ENCODE measurements at regions of chr13 and their contacts with region 1.

Region 1: GRCh38 chr13:33610471-33611015 is 207.4 kb upstream of the RFC3 start:
- DNase-seq: peak; percentile 40
- H3K4me3 Mint-ChIP-seq: peak overlapping the region; percentile 70
- H3K27ac Mint-ChIP-seq: peak overlapping the region; percentile 95
- H3K4me1 Mint-ChIP-seq: peaks cover 50% of the 10 kb centered on the region
- H3K27me3 Mint-ChIP-seq: no peaks in the 10 kb centered on the region

Region 2: GRCh38 chr13:32639502-32640105 is 970.9 kb before region 1 on chr13:
- intact Hi-C with region 1: loop called (anchors 10 kb)
- DNase-seq: no peak
- H3K4me3 Mint-ChIP-seq: no peak overlapping the region
- H3K27ac Mint-ChIP-seq: no peak overlapping the region
- H3K4me1 Mint-ChIP-seq: peaks cover 29% of the 10 kb centered on the region
- H3K27me3 Mint-ChIP-seq: no peaks in the 10 kb centered on the region

Region 3: GRCh38 chr13:33188093-33188882 is 422.3 kb before region 1 on chr13:
- intact Hi-C with region 1: loop called (anchors 2 kb)
- DNase-seq: no peak
- H3K4me3 Mint-ChIP-seq: no peak overlapping the region
- H3K27ac Mint-ChIP-seq: peak overlapping the region; percentile 97
- H3K4me1 Mint-ChIP-seq: peaks cover 30% of the 10 kb centered on the region
- H3K27me3 Mint-ChIP-seq: no peaks in the 10 kb centered on the region

Region 4: GRCh38 chr13:33624740-33625139 is 14.2 kb after region 1 on chr13:
- intact Hi-C with region 1: loop called (anchors 1 kb)
- DNase-seq: no peak
- H3K4me3 Mint-ChIP-seq: no peak overlapping the region
- H3K27ac Mint-ChIP-seq: peak overlapping the region; percentile 58
- H3K4me1 Mint-ChIP-seq: peaks cover 23% of the 10 kb centered on the region
- H3K27me3 Mint-ChIP-seq: no peaks in the 10 kb centered on the region

Region 5: GRCh38 chr13:33723772-33724435 is 113.4 kb after region 1 on chr13:
- intact Hi-C with region 1: loop called (anchors 1 kb)
- DNase-seq: peak; percentile 56
- H3K4me3 Mint-ChIP-seq: no peak overlapping the region
- H3K27ac Mint-ChIP-seq: peak overlapping the region; percentile 80
- H3K4me1 Mint-ChIP-seq: peaks cover 34% of the 10 kb centered on the region
- H3K27me3 Mint-ChIP-seq: no peaks in the 10 kb centered on the region

Region 6: DNA sequence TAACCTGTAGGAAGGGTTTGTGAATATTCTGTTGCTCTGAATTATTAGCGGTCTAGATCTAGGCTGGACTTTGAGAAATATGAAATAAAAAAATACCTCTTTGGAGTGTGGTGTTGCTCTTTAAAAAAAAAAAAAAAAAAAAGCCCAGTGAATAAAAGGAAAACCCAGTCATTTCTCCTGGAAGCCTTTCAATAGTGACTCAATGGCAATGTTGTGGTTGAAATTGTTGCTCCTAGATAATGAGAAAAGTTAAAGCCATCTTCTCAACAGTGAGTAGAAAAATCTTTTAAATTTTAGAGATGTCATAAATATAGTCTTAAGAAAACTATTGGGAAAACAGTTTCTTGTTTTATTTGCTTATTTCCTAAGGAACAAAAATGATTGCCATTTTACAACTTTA is 342.7 kb after region 1 on chr13:
- intact Hi-C with region 1: no loop called
- DNase-seq: no peak
- H3K4me3 Mint-ChIP-seq: no peak overlapping the region
- H3K27ac Mint-ChIP-seq: no peak overlapping the region
- H3K4me1 Mint-ChIP-seq: no peaks in the 10 kb centered on the region
- H3K27me3 Mint-ChIP-seq: no peaks in the 10 kb centered on the region